ENCODE measurements at regions of chr1 and their contacts with region 1.

Region 1: GRCh38 chr1:233440951-233441401 is 113.5 kb downstream of the MAP3K21 start:
- DNase-seq: peak; percentile 49
- H3K4me3 ChIP-seq: no peak overlapping the region; a peak in 1 of 4 replicates
- H3K27ac ChIP-seq: no peak overlapping the region
- H3K4me1 ChIP-seq: peaks cover 0 to 6% of the 10 kb centered on the region in 2 experiments; a peak in 1 of 4 replicates
- H3K27me3 ChIP-seq: no peaks in the 10 kb centered on the region
- CTCF ChIP-seq: peak; percentile 83
- EP300 ChIP-seq: no peak
- RAD21 ChIP-seq: peak; percentile 97

Region 2: GRCh38 chr1:233097959-233098580 is 342.9 kb before region 1 on chr1:
- CTCF ChIA-PET with region 1: no interaction called
- POLR2A ChIA-PET with region 1: no interaction called
- DNase-seq: no peak
- H3K4me3 ChIP-seq: no peak overlapping the region
- H3K27ac ChIP-seq: no peak overlapping the region
- H3K4me1 ChIP-seq: peaks cover 0 to 2% of the 10 kb centered on the region in 2 experiments; a peak in 3 of 4 replicates
- H3K27me3 ChIP-seq: no peaks in the 10 kb centered on the region
- CTCF ChIP-seq: no peak
- EP300 ChIP-seq: no peak
- RAD21 ChIP-seq: no peak

Region 3: GRCh38 chr1:233261206-233261605 is 179.8 kb before region 1 on chr1:
- CTCF ChIA-PET with region 1: no interaction called
- POLR2A ChIA-PET with region 1: no interaction called
- DNase-seq: no peak
- H3K4me3 ChIP-seq: no peak overlapping the region
- H3K27ac ChIP-seq: no peak overlapping the region
- H3K4me1 ChIP-seq: peaks cover 0 to 2% of the 10 kb centered on the region in 2 experiments; a peak in 2 of 4 replicates
- H3K27me3 ChIP-seq: no peaks in the 10 kb centered on the region
- CTCF ChIP-seq: no peak
- EP300 ChIP-seq: no peak
- RAD21 ChIP-seq: no peak

Region 4: DNA sequence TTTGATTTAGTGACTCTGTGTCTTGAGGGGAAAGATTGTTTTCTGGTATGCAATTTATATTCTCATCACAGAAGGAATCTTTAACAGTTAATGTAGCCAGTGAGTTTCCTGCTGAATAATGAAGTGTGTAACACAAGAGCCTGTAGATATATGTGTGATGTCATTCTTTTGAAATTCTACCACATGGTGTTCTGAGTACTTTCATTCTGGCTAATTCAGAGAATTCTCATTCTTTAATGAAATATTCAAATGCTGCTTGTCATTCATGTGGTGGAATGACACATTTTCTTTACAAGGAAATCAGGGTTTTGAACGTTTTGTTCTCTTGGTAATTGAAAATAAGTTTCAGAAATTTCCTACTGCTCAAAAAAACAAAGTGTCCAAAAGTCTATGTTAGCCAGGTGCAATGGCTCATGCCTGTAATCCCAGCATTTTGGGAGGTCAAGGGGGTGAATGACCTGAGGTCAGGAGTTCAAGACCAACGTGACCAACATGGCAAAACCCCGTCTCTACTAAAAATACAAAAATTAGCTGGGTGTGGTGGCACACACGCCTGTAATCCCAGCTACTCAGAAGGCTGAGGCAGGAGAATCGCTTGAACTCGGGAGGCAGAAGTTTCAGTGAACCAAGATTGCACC is 33.9 kb before region 1 on chr1:
- CTCF ChIA-PET with region 1: interaction called, 14 read pairs
- POLR2A ChIA-PET with region 1: no interaction called
- DNase-seq: no peak
- H3K4me3 ChIP-seq: no peak overlapping the region
- H3K27ac ChIP-seq: 0 out of 4 replicates have a peak overlapping the region, but pooled peaks of 1 of the 2 experiments have one; percentile 56
- H3K4me1 ChIP-seq: peaks cover 0 to 6% of the 10 kb centered on the region in 2 experiments; a peak in 1 of 4 replicates
- H3K27me3 ChIP-seq: no peaks in the 10 kb centered on the region
- CTCF ChIP-seq: no peak
- EP300 ChIP-seq: no peak
- RAD21 ChIP-seq: no peak

Region 5: GRCh38 chr1:233480198-233480597 is 39.2 kb after region 1 on chr1:
- CTCF ChIA-PET with region 1: interaction called, 11 read pairs
- POLR2A ChIA-PET with region 1: no interaction called
- DNase-seq: no peak
- H3K4me3 ChIP-seq: no peak overlapping the region
- H3K27ac ChIP-seq: no peak overlapping the region
- H3K4me1 ChIP-seq: no peaks in the 10 kb centered on the region; a peak in 1 of 4 replicates
- H3K27me3 ChIP-seq: no peaks in the 10 kb centered on the region
- CTCF ChIP-seq: no peak
- EP300 ChIP-seq: no peak
- RAD21 ChIP-seq: no peak

Region 6: DNA sequence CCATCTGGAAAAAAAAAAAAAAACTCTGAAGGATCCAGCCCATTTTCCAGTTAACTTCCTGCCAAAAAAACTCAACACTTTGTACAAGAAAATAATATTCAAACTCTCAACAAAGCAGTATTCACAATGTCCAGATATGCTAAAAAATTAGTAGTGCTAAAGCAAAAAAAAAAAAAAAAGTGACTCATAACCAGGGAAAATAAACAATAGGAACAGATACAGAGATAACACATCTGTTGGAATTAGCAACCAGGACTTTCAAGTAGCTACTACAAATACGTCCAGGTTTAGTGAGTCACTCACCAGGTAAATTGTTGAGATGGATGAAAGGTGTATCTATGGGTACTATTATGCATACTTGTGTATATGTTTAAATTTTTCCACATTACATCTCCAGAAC is 318.6 kb after region 1 on chr1:
- CTCF ChIA-PET with region 1: no interaction called
- POLR2A ChIA-PET with region 1: no interaction called
- DNase-seq: no peak
- H3K4me3 ChIP-seq: no peak overlapping the region
- H3K27ac ChIP-seq: no peak overlapping the region
- H3K4me1 ChIP-seq: no peaks in the 10 kb centered on the region; a peak in 1 of 4 replicates
- H3K27me3 ChIP-seq: no peaks in the 10 kb centered on the region
- CTCF ChIP-seq: no peak
- EP300 ChIP-seq: no peak
- RAD21 ChIP-seq: no peak

Region 7: GRCh38 chr1:233863901-233864545 is 423.0 kb after region 1 on chr1:
- CTCF ChIA-PET with region 1: interaction called, 10 read pairs
- POLR2A ChIA-PET with region 1: no interaction called
- DNase-seq: no peak
- H3K4me3 ChIP-seq: no peak overlapping the region
- H3K27ac ChIP-seq: no peak overlapping the region
- H3K4me1 ChIP-seq: no peaks in the 10 kb centered on the region
- H3K27me3 ChIP-seq: no peaks in the 10 kb centered on the region
- CTCF ChIP-seq: no peak
- EP300 ChIP-seq: no peak
- RAD21 ChIP-seq: no peak

Region 8: GRCh38 chr1:234107416-234108021 is 666.5 kb after region 1 on chr1:
- CTCF ChIA-PET with region 1: interaction called, 63 read pairs
- POLR2A ChIA-PET with region 1: no interaction called
- DNase-seq: no peak
- H3K4me3 ChIP-seq: no peak overlapping the region
- H3K27ac ChIP-seq: no peak overlapping the region
- H3K4me1 ChIP-seq: no peaks in the 10 kb centered on the region
- H3K27me3 ChIP-seq: no peaks in the 10 kb centered on the region
- CTCF ChIP-seq: no peak
- EP300 ChIP-seq: no peak
- RAD21 ChIP-seq: no peak

Measured in SK-N-SH (cell line).